GM12878 (cell line): ENCODE measurements at regions of chr1 and their contacts with region 1.

Region 1: DNA sequence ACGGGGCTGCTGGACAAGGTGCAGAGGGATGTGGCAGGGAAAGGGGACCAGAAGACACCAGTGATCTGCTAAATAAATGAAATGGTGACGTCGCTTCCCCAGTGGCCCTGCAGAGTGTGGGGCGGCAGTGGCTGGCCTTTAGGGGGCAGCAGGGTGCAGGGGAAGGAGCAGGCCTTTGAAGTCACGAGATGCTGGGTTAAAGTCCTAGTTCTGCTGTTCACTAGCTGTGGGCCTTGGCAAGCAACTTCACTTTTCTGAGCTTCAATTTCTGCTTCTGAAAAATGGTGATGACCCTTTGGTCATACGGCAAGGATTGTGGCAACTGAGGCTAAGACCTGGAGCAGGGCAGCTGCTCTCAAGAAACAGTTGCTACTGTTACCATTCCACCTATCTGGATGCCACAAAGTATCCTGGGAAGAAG is 9.2 kb upstream of the GALE start:
- DNase-seq: peak; percentile 34
- ATAC-seq: peak; percentile 95
- H3K4me3 ChIP-seq: no peak overlapping the region
- H3K27ac ChIP-seq: no peak overlapping the region
- H3K4me1 ChIP-seq: peaks cover 35% of the 10 kb centered on the region
- H3K27me3 ChIP-seq: no peaks in the 10 kb centered on the region
- CTCF ChIP-seq: peak; percentile 95 to 98 (median 97)
- EP300 ChIP-seq: no peak
- POLR2A ChIP-seq: no peak
- RAD21 ChIP-seq: peak; percentile 83

Region 2: GRCh38 chr1:23699280-23700179 is 110.2 kb before region 1 on chr1:
- CTCF ChIA-PET with region 1: no interaction called
- POLR2A ChIA-PET with region 1: no interaction called
- RAD21 ChIA-PET with region 1: no interaction called
- SMC1A ChIA-PET with region 1: no interaction called
- in situ Hi-C with region 1: no loop called
- intact Hi-C with region 1: no loop called
- DNase-seq: no peak
- ATAC-seq: peak; percentile 82
- H3K4me3 ChIP-seq: no peak overlapping the region
- H3K27ac ChIP-seq: no peak overlapping the region
- H3K4me1 ChIP-seq: peaks cover 7% of the 10 kb centered on the region
- H3K27me3 ChIP-seq: no peaks in the 10 kb centered on the region
- CTCF ChIP-seq: no peak
- EP300 ChIP-seq: no peak
- POLR2A ChIP-seq: no peak
- RAD21 ChIP-seq: no peak

Region 3: GRCh38 chr1:23777979-23778814 is 31.6 kb before region 1 on chr1 and contains the start of gene PITHD1:
- CTCF ChIA-PET with region 1: interaction called, 87 read pairs
- POLR2A ChIA-PET with region 1: interaction called, 5 read pairs
- RAD21 ChIA-PET with region 1: interaction called, 6 read pairs
- SMC1A ChIA-PET with region 1: interaction called, 19 read pairs
- in situ Hi-C with region 1: no loop called
- intact Hi-C with region 1: no loop called
- DNase-seq: peak; percentile 45
- ATAC-seq: peak; percentile 96
- H3K4me3 ChIP-seq: peak within 1 kb of the TSS; percentile 99
- H3K27ac ChIP-seq: peak within 1 kb of the TSS; percentile 82
- H3K4me1 ChIP-seq: peaks cover 10% of the 10 kb centered on the region; the same call in 1 of the 2 replicates
- H3K27me3 ChIP-seq: no peaks in the 10 kb centered on the region
- CTCF ChIP-seq: no peak
- EP300 ChIP-seq: no peak
- POLR2A ChIP-seq: peak; percentile 98
- RAD21 ChIP-seq: no peak
- polyA plus RNA-seq, gene PITHD1: 23.7 to 43.3 TPM

Region 4: GRCh38 chr1:23838401-23838866 is 28.7 kb after region 1 on chr1:
- CTCF ChIA-PET with region 1: interaction called, 16 read pairs
- POLR2A ChIA-PET with region 1: interaction called, 3 read pairs
- RAD21 ChIA-PET with region 1: interaction called, 14 read pairs
- SMC1A ChIA-PET with region 1: interaction called, 8 read pairs
- in situ Hi-C with region 1: no loop called
- intact Hi-C with region 1: no loop called
- DNase-seq: peak; percentile 28
- ATAC-seq: peak; percentile 100
- H3K4me3 ChIP-seq: peak overlapping the region; percentile 61; the same call in 1 of the 2 replicates
- H3K27ac ChIP-seq: no peak overlapping the region
- H3K4me1 ChIP-seq: no peaks in the 10 kb centered on the region
- H3K27me3 ChIP-seq: no peaks in the 10 kb centered on the region
- CTCF ChIP-seq: 0 out of 6 replicates have a peak, but pooled peaks of 1 of the 3 experiments have one; percentile 1
- EP300 ChIP-seq: no peak
- POLR2A ChIP-seq: 0 out of 2 replicates have a peak, but pooled peaks have one; percentile 38
- RAD21 ChIP-seq: no peak

Region 5: GRCh38 chr1:23867953-23868556 is 58.3 kb after region 1 on chr1 and contains the start of gene FUCA1:
- CTCF ChIA-PET with region 1: interaction called, 50 read pairs
- POLR2A ChIA-PET with region 1: interaction called, 4 read pairs
- RAD21 ChIA-PET with region 1: interaction called, 20 read pairs
- SMC1A ChIA-PET with region 1: interaction called, 34 read pairs
- in situ Hi-C with region 1: loop called (anchors 10 kb)
- intact Hi-C with region 1: loop called (anchors 1 kb)
- DNase-seq: peak; percentile 72
- ATAC-seq: peak; percentile 92
- H3K4me3 ChIP-seq: peak within 1 kb of the TSS; percentile 77
- H3K27ac ChIP-seq: peak within 1 kb of the TSS; percentile 63
- H3K4me1 ChIP-seq: peaks cover 10% of the 10 kb centered on the region
- H3K27me3 ChIP-seq: no peaks in the 10 kb centered on the region
- CTCF ChIP-seq: peak; percentile 94 to 96 (median 96)
- EP300 ChIP-seq: no peak
- POLR2A ChIP-seq: peak; percentile 91
- RAD21 ChIP-seq: peak; percentile 68
- polyA plus RNA-seq, gene FUCA1: 33.3 to 41.8 TPM

Region 6: DNA sequence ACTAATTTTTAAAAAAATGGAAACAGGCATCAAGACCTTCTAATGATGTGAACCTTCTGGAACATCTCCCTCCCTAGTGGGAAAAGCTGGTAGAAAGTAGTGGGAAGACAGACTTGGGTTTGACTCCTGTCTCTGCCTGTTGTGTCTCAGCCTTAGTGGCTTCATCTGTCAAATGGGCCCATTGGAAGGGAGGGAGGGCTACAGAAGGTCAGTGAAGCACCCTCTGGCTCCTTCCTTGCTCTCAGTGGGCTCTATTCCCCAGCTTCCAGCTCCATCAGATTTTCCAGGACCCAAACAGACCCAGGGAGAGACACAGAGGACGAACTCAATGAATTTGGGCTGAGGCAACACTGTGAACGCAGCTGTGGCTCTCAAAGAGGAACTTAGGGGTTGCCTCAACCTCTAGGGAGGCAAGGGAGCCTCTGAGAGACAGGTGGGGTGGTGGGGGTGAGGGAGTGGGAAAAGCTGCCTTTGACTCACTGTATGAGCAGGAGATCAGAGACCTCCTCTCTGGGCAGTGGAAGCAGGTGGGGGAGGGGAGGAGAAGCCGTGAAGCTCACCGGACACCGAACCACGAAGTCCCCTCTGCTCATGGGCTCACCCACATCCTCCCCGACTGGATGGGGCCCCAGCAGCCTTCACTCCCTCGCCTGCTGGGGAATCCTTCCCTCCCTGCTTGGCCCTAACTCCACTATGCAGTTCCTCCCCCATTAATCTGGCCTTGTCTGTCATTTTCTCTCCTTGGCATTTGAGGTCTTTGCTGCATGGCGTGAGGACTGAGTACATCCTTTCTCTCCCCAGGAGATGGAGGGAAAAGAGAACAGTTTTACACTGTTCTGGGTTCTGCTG is 99.0 kb after region 1 on chr1:
- CTCF ChIA-PET with region 1: interaction called, 109 read pairs
- POLR2A ChIA-PET with region 1: interaction called, 5 read pairs
- RAD21 ChIA-PET with region 1: interaction called, 54 read pairs
- SMC1A ChIA-PET with region 1: interaction called, 66 read pairs
- in situ Hi-C with region 1: no loop called
- intact Hi-C with region 1: no loop called
- DNase-seq: peak; percentile 82
- ATAC-seq: peak; percentile 55
- H3K4me3 ChIP-seq: peak overlapping the region; percentile 66
- H3K27ac ChIP-seq: peak overlapping the region; percentile 98
- H3K4me1 ChIP-seq: peaks cover 62% of the 10 kb centered on the region
- H3K27me3 ChIP-seq: no peaks in the 10 kb centered on the region
- CTCF ChIP-seq: no peak
- EP300 ChIP-seq: no peak; a peak in 1 of 4 replicates
- POLR2A ChIP-seq: peak; percentile 69; the same call in 1 of the 2 replicates
- RAD21 ChIP-seq: no peak

Region 7: GRCh38 chr1:23930861-23931490 is 121.2 kb after region 1 on chr1:
- CTCF ChIA-PET with region 1: interaction called, 21 read pairs
- POLR2A ChIA-PET with region 1: no interaction called
- RAD21 ChIA-PET with region 1: interaction called, 4 read pairs
- SMC1A ChIA-PET with region 1: interaction called, 8 read pairs
- in situ Hi-C with region 1: no loop called
- intact Hi-C with region 1: no loop called
- DNase-seq: no peak
- ATAC-seq: peak; percentile 23; the same call in 2 of the 3 replicates
- H3K4me3 ChIP-seq: peak overlapping the region; percentile 9; the same call in 1 of the 2 replicates
- H3K27ac ChIP-seq: no peak overlapping the region
- H3K4me1 ChIP-seq: peaks cover 14% of the 10 kb centered on the region
- H3K27me3 ChIP-seq: no peaks in the 10 kb centered on the region
- CTCF ChIP-seq: no peak
- EP300 ChIP-seq: no peak
- POLR2A ChIP-seq: no peak
- RAD21 ChIP-seq: no peak

Region 8: DNA sequence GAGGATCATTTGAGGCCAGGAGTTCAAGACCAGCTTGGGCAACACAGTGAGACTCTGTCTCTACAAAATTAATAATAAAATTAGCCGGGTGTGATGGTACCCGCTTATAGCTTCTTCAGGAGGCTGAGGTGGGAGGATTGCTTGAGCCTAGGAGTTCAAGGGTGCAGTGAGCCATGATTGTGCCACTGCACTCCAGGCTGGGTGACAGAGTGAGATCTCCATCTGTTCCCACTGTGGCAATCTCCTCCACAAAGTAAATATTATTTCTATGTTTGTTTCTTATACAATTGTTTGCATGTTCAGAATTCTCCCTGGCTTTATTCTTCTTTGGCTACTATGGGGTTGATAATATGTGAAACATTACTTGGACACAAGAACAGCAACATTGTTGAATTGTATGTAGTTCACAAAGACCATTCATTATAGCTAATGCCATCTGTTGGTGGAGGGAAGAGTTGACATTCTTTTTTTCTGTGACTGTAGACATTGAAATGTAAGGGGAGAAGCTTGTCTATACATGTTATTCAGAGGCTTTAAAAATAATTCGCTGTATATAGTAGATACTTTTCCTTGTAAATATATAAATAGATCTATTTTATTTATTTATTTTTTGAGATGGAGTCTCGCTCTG is 218.2 kb after region 1 on chr1:
- CTCF ChIA-PET with region 1: interaction called, 30 read pairs
- POLR2A ChIA-PET with region 1: no interaction called
- RAD21 ChIA-PET with region 1: interaction called, 3 read pairs
- SMC1A ChIA-PET with region 1: interaction called, 3 read pairs
- in situ Hi-C with region 1: no loop called
- intact Hi-C with region 1: loop called (anchors 10 kb)
- DNase-seq: peak; percentile 20
- ATAC-seq: peak; percentile 85
- H3K4me3 ChIP-seq: no peak overlapping the region
- H3K27ac ChIP-seq: no peak overlapping the region
- H3K4me1 ChIP-seq: no peaks in the 10 kb centered on the region
- H3K27me3 ChIP-seq: no peaks in the 10 kb centered on the region
- CTCF ChIP-seq: peak; percentile 54 to 60 (median 56); a peak in 5 of 6 replicates
- EP300 ChIP-seq: no peak
- POLR2A ChIP-seq: no peak
- RAD21 ChIP-seq: peak; percentile 78